Activated T-helper 2 cell treated with anti-CD3 and anti-CD28 coated beads, Interferon-gamma antibody, Interleukin-2, Interleukin-4, amounts not matched to agents 10 μg/mL and 5 μg/mL and 100 μg/mL, durations not matched to agents 14 hours and 24 hours and 36 hours (primary cell): ENCODE measurements at regions of chr2 and their contacts with region 1.

Region 1: GRCh38 chr2:160994141-160995002 is 165.9 kb upstream of the TANK start:
- DNase-seq: peak; percentile 55
- H3K4me3 Mint-ChIP-seq: no peak overlapping the region
- H3K27ac Mint-ChIP-seq: no peak overlapping the region
- H3K4me1 Mint-ChIP-seq: peaks cover 5% of the 10 kb centered on the region
- H3K27me3 Mint-ChIP-seq: peaks cover 6% of the 10 kb centered on the region

Region 2: GRCh38 chr2:160252278-160252887 is 742.0 kb before region 1 on chr2:
- intact Hi-C with region 1: loop called (anchors 1 kb)
- DNase-seq: no peak
- H3K4me3 Mint-ChIP-seq: no peak overlapping the region
- H3K27ac Mint-ChIP-seq: no peak overlapping the region
- H3K4me1 Mint-ChIP-seq: no peaks in the 10 kb centered on the region
- H3K27me3 Mint-ChIP-seq: peaks cover 24% of the 10 kb centered on the region

Region 3: GRCh38 chr2:160324161-160324800 is 670.1 kb before region 1 on chr2:
- intact Hi-C with region 1: loop called (anchors 5 kb)
- DNase-seq: no peak
- H3K4me3 Mint-ChIP-seq: no peak overlapping the region
- H3K27ac Mint-ChIP-seq: no peak overlapping the region
- H3K4me1 Mint-ChIP-seq: peaks cover 45% of the 10 kb centered on the region
- H3K27me3 Mint-ChIP-seq: peaks cover 5% of the 10 kb centered on the region

Region 4: DNA sequence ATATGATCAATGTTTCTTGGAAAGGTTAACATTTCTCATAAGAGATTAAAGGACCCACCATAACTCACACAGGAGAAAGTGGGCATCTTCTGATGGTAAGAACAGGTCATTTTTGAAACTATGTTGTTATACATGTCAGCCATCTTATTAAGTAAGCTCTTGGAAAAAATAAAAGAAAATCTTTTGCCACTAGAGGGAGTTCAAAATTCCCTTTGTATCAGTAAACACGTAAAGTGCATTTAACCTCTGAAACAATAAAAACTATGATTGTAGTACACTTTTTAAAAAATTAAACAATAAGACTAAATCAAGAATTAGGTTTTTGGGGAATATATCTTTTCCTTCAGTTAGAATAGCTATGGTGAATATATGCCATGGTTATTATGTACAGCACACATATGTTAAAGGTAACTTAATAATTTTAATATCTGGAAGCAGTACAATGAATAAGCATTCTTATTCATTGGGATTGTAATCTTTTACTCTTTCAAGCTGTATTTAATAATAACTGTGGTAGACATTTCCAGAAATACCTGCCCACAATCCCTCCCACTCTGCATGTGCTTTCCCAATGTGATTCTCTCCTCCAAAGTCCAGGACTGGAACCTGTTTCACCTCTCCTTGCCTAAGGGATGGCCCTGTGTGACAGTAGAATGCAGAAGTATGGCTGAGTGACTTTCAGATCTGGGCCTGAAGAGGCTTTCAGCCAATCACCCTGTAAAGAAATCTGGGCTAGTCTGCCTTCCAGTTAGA is 564.9 kb before region 1 on chr2:
- intact Hi-C with region 1: loop called (anchors 10 kb)
- DNase-seq: no peak
- H3K4me3 Mint-ChIP-seq: no peak overlapping the region
- H3K27ac Mint-ChIP-seq: no peak overlapping the region
- H3K4me1 Mint-ChIP-seq: peaks cover 58% of the 10 kb centered on the region
- H3K27me3 Mint-ChIP-seq: no peaks in the 10 kb centered on the region

Region 5: GRCh38 chr2:161273038-161273760 is 278.8 kb after region 1 on chr2:
- intact Hi-C with region 1: loop called (anchors 10 kb)
- DNase-seq: no peak
- H3K4me3 Mint-ChIP-seq: no peak overlapping the region
- H3K27ac Mint-ChIP-seq: no peak overlapping the region
- H3K4me1 Mint-ChIP-seq: peaks cover 8% of the 10 kb centered on the region
- H3K27me3 Mint-ChIP-seq: peaks cover 20% of the 10 kb centered on the region